ENCODE measurements at regions of chr5 and their contacts with region 1.

Region 1: GRCh38 chr5:141192110-141192732 is at the start of gene PCDHB10:
- DNase-seq: peak; percentile 34
- H3K4me3 ChIP-seq: no peak within 1 kb of the TSS
- H3K27ac ChIP-seq: no peak within 1 kb of the TSS
- H3K4me1 ChIP-seq: no peaks in the 10 kb centered on the region
- CTCF ChIP-seq: peak; percentile 86
- total RNA-seq, gene PCDHB10: 0.08 TPM in 1 of 2 replicates, not detected in the other

Region 2: DNA sequence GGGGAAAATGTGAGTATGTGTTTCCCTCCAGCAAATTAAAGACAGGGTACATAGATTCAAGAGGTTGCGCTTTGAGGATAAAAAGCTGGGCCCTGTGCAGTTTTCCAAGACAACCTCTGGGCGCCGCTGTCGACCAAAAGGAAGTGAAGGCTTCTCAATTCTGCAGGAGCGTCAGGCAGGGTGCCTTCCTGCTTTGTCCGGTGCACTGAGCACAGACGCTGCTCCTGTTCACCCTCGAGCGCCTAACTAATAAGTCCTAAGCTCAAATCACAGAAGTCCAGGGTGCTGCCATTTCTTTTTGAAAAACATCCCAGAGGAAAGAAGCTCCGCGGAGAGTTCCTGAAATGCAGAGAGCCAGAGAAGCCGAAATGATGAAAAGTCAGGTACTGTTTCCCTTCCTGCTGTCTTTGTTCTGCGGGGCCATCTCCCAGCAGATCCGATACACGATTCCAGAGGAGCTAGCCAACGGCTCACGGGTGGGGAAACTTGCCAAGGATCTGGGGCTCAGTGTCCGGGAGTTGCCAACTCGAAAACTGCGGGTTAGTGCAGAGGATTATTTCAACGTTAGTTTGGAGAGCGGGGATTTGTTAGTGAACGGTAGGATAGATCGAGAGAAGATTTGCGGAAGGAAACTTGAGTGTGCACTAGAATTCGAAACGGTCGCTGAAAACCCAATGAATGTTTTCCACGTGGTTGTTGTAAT is 157.8 kb after region 1 on chr5 and contains the start of gene PCDHGB1:
- CTCF ChIA-PET with region 1: no interaction called
- POLR2A ChIA-PET with region 1: no interaction called
- intact Hi-C with region 1: loop called (anchors 10 kb)
- DNase-seq: peak; percentile 79
- H3K4me3 ChIP-seq: peak within 1 kb of the TSS; percentile 54
- H3K27ac ChIP-seq: no peak within 1 kb of the TSS
- H3K4me1 ChIP-seq: peaks cover 7% of the 10 kb centered on the region
- CTCF ChIP-seq: peak; percentile 88
- total RNA-seq, gene PCDHGB1: 2.8 and 4.1 TPM in 2 replicates